Heart right ventricle (tissue), 16 donors: ENCODE measurements at regions of chr17 and their contacts with region 1.

Region 1: DNA sequence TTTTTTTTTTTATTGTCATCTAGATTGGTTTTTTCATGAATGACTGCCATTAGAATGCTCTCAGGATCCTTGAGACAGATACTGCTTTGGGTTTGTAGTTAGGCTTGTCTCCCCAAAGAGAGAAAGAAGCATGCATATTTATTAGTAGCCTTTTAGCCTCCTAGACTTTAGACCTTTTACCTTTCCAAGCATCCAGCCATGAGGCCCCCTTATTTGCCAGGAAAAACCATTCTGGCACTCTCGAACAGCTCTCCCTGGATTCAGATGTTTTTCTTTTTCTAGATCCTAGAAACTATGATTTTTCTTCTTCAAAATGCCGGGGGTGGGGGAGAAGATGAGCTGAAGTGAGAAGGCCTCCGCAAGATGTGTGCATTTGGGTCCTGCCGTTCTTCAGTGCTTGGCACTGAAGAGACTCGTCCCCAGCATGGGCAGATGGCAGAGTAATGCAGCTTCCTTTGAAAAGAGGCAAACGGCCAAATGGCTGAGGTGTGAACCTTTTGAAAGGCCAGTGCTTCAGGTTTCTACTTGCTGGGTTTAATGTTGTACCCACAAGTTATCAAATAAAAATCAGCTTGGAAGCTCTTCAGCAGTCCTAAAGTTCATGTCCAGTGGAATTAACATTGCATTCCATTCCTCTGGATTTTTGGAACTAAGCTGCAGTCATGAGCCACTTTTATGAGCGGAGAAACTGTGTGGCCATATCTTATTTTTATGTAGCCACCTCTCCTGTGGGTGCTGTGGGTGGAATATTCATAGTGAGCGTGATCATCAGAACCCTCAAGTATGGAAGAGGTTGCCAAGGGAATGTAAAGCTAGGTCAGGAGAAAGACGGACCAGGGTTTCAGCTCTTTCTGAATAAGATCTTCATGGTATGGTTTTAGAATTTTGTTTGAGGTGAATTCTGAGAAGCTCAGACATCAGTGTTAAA is 7.2 kb downstream of the SOCS7 start:
- DNase-seq: no peak
- ATAC-seq: peak in 4 of 8 donors; percentile 25 to 49 (median 40)
- H3K4me3 ChIP-seq: no peak overlapping the region
- H3K27ac ChIP-seq: peak overlapping the region in 4 of 10 donors; percentile 36 to 49 (median 38)
- H3K4me1 ChIP-seq: peaks cover 8 to 78% (median 54%) of the 10 kb centered on the region in 9 donors
- H3K27me3 ChIP-seq: no peaks in the 10 kb centered on the region
- CTCF ChIP-seq: no peak

Region 2: GRCh38 chr17:38395090-38395489 is 36.2 kb after region 1 on chr17:
- intact Hi-C with region 1: loop called in 1 of 10 experiments (anchors 5 kb)
- DNase-seq: no peak
- ATAC-seq: no peak
- H3K4me3 ChIP-seq: no peak overlapping the region
- H3K27ac ChIP-seq: no peak overlapping the region
- H3K4me1 ChIP-seq: peaks cover 0 to 6% (median 0%) of the 10 kb centered on the region in 9 donors
- H3K27me3 ChIP-seq: no peaks in the 10 kb centered on the region
- CTCF ChIP-seq: no peak

Region 3: GRCh38 chr17:38403491-38403890 is 44.6 kb after region 1 on chr17:
- intact Hi-C with region 1: loop called in 1 of 10 experiments (anchors 5 kb)
- DNase-seq: no peak
- ATAC-seq: peak in 4 of 8 donors; percentile 17 to 62 (median 40)
- H3K4me3 ChIP-seq: no peak overlapping the region
- H3K27ac ChIP-seq: no peak overlapping the region
- H3K4me1 ChIP-seq: peaks cover 0 to 5% (median 0%) of the 10 kb centered on the region in 9 donors
- H3K27me3 ChIP-seq: no peaks in the 10 kb centered on the region
- CTCF ChIP-seq: no peak